Mammary epithelial cell (primary cell): ENCODE measurements at regions of chr1 and their contacts with region 1.

Region 1: DNA sequence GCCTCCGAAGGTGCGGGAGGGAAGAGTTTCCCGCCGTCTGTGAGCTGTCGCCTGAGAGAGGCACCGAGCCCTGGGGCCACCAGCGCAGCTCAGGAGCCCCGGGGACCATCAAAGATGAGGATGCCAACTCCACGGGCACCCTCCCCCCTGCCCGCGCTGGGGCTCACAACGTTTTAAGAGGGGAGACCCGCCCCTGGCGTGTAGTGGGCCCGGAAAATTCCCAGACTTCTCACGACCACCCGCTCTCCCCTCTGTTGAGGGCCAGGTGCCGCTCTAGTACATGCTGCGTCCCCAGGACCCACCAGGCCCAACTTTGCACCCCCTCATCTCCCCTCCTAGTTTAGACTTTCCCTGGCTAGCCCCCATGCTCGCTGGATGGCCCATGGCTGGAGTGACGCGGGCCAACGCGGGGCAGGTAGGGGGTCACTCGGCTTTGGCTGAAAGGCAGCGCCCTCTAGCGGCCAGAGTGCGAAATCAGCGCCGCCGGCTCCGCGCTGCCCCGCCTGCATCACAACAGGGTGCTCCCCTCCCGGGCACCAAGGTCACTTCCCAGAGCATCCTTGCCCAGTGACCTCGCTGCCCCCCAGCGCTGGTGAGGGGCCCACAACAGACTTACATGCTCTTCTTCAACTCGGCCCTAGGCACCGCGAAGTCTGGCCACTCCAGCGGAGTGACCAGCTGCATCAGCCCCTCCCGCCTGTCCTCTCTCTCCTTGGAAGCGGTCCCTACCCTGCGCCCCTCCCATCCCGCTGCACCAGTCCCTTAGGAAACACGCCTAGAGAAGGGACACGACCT is 1.8 kb downstream of the CD160 start:
- DNase-seq: peak; percentile 44
- H3K4me3 ChIP-seq: peak overlapping the region; percentile 21 to 35 (median 25)
- H3K27ac ChIP-seq: no peak overlapping the region
- H3K4me1 ChIP-seq: peaks cover 19% of the 10 kb centered on the region
- H3K27me3 ChIP-seq: no peaks in the 10 kb centered on the region
- CTCF ChIP-seq: peak; percentile 57 to 88

Region 2: DNA sequence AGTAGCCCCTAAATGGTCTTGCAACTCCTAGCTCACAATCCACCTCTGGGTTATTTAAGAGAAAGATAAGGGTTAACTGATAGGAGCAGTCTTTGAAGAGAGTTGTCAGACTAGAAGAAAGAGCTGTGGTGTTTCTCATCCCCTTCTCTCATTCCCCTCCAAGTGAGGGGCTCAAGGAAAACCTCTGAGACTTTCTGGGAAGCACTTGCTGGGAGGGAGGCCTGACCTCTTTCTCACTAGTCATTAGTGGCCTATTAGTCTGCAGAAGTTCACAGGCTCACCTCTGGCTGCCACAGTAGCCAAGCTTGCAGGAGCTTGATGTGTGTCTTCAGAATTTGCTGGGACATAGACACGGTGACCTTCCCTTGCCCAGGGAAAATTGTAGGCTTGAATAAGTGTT is 119.5 kb before region 1 on chr1:
- CTCF ChIA-PET with region 1: no interaction called
- dilution Hi-C with region 1: no loop called
- in situ Hi-C with region 1: no loop called
- intact Hi-C with region 1: loop called (anchors 5 kb)
- DNase-seq: no peak
- H3K4me3 ChIP-seq: no peak overlapping the region
- H3K27ac ChIP-seq: no peak overlapping the region
- H3K4me1 ChIP-seq: no peaks in the 10 kb centered on the region
- H3K27me3 ChIP-seq: no peaks in the 10 kb centered on the region
- CTCF ChIP-seq: no peak

Region 3: GRCh38 chr1:145706086-145706680 is 14.9 kb before region 1 on chr1:
- CTCF ChIA-PET with region 1: no interaction called
- dilution Hi-C with region 1: no loop called
- in situ Hi-C with region 1: no loop called
- intact Hi-C with region 1: loop called (anchors 1 kb)
- DNase-seq: peak; percentile 94
- H3K4me3 ChIP-seq: no peak overlapping the region
- H3K27ac ChIP-seq: peak overlapping the region; percentile 65
- H3K4me1 ChIP-seq: peaks cover 29% of the 10 kb centered on the region
- H3K27me3 ChIP-seq: no peaks in the 10 kb centered on the region
- CTCF ChIP-seq: no peak

Region 4: DNA sequence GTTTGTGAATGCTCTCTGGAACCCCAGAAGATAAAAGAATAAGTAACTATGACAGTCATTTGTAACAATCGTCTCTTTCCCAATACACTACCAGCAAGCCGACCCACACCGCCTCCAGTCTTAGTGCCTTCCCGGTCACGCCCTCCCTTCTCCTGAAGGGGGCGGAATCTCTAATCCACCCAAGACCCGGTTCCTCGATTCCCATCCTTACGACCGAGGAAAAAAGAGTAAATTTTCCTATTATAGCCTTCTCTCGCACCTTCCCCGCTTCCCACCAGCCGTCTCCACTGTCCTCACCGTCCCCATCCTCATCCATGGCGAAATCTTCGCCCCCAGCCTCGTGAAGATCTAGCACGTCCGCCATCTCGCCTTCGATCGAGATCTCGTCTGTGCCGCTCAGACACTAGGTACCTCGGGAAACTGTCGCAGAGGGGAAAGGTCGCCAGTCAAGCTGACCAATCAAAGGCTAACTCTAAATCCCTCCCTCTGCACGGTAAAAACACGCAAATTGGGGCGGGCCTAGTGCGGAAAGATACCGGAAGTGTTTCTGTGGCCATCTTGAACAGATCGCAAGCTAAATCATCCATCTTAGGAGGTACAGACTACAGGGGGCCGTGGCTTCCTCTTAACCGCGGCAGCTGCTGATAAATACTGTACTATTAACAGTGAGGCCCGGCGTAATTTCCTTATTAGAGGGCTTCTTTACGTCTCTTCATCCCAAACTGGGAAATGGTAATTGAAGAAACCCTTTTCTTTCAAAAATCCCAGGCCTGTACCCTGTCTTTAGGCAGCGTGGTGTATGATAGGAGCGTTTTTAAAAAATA is 206.2 kb after region 1 on chr1 and contains the start of gene RBM8A:
- CTCF ChIA-PET with region 1: no interaction called
- dilution Hi-C with region 1: no loop called
- in situ Hi-C with region 1: no loop called
- intact Hi-C with region 1: no loop called
- DNase-seq: peak; percentile 97
- H3K4me3 ChIP-seq: peak within 1 kb of the TSS; percentile 77 to 99 (median 80)
- H3K27ac ChIP-seq: peak within 1 kb of the TSS; percentile 94
- H3K4me1 ChIP-seq: peaks cover 3% of the 10 kb centered on the region
- H3K27me3 ChIP-seq: no peaks in the 10 kb centered on the region
- CTCF ChIP-seq: peak; percentile 60 to 61
- total RNA-seq, gene RBM8A: 80.2 to 172 TPM

Region 5: GRCh38 chr1:145963995-145964901 is 243.2 kb after region 1 on chr1 and contains the starts of genes ANKRD34A and POLR3GL:
- CTCF ChIA-PET with region 1: no interaction called
- dilution Hi-C with region 1: no loop called
- in situ Hi-C with region 1: no loop called
- intact Hi-C with region 1: no loop called
- DNase-seq: peak; percentile 95
- H3K4me3 ChIP-seq: peak within 1 kb of the TSS; percentile 61 to 67 (median 62)
- H3K27ac ChIP-seq: peak within 1 kb of the TSS; percentile 63
- H3K4me1 ChIP-seq: peaks cover 39% of the 10 kb centered on the region
- H3K27me3 ChIP-seq: no peaks in the 10 kb centered on the region
- CTCF ChIP-seq: no peak
- total RNA-seq, gene ANKRD34A: 1.3 to 1.6 TPM
- total RNA-seq, gene POLR3GL: 4.7 to 10.0 TPM